ENCODE measurements at regions of chr2 and their contacts with region 1.

Region 1: DNA sequence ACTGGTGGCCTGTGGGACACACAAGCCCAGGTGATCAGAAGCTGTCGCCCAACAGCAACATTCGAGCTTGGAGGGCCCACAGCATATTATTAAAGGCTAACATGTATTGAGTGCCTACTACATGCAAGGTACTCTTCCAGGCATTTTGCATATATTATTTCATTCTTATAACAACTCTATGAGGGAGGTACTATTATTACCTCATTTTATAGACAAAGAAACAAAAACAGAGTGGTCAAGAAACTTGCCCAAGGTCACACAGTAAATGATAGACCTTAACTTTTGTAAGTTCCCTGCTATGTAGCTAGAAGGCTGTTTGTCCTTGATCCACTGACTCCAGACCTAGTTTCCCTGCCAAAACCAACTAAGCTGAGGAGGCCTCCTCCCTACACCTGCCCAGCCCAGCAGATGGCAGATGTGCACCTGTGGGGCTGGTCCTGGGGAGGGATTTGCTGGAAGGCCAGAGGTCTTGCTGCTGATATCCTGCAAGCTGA is 35.7 kb downstream of the KANSL3 start:
- DNase-seq: peak; percentile 5
- H3K4me3 ChIP-seq: no peak overlapping the region
- H3K27ac ChIP-seq: no peak overlapping the region
- H3K4me1 ChIP-seq: no peaks in the 10 kb centered on the region
- CTCF ChIP-seq: 0 out of 2 replicates have a peak, but pooled peaks have one; percentile 23

Region 2: DNA sequence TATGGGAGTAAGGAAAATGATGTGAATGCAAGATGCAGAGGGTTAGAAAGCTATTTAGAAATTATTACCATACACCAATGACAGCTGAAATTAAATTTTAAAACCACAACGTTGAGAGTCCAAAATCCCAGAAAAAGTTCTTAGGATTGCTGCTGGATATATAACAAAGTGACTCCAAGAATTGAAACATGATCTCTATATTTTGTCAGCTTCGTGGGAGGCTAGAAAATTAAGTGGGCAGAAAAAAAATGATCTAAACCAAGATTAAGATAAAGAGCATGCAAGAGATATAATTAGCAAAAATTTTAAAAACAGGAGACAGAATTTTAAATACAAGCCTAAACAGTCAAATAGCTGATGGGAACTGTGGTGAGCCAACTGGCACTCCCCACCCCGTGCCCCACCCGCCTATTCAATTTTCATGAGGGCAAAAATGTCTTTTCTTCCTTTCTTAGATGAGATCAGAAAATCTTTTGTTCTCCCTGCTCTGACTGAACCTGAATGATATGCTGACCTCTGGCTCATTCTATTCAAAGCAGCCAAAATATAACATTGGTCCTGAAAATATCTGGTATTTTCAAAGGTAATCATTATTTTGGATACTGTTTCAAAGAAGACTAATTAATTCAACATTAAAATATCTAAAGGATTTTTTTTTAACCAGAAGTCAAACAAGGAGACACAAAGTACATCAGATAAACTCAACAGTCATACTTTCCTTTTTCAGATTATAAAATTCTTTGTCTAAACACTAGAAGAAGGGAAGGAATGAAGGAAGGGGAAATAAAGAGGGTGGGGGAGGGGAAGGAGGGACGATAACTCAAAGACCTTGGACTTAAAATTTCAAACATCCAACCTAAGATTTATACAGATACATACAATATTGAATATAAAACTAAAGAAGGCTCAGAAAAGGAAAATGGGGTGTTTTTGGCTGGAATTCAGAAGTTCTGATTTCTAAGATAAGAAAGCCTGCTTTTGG is 23.5 kb after region 1 on chr2:
- CTCF ChIA-PET with region 1: no interaction called
- POLR2A ChIA-PET with region 1: no interaction called
- intact Hi-C with region 1: no loop called
- DNase-seq: no peak
- H3K4me3 ChIP-seq: no peak overlapping the region
- H3K27ac ChIP-seq: no peak overlapping the region
- H3K4me1 ChIP-seq: no peaks in the 10 kb centered on the region
- CTCF ChIP-seq: no peak

Region 3: GRCh38 chr2:96801005-96801785 is 198.8 kb after region 1 on chr2:
- CTCF ChIA-PET with region 1: no interaction called
- POLR2A ChIA-PET with region 1: no interaction called
- intact Hi-C with region 1: loop called (anchors 5 kb)
- DNase-seq: peak; percentile 80
- H3K4me3 ChIP-seq: no peak overlapping the region
- H3K27ac ChIP-seq: no peak overlapping the region
- H3K4me1 ChIP-seq: peaks cover 18% of the 10 kb centered on the region
- CTCF ChIP-seq: peak; percentile 89

Region 4: DNA sequence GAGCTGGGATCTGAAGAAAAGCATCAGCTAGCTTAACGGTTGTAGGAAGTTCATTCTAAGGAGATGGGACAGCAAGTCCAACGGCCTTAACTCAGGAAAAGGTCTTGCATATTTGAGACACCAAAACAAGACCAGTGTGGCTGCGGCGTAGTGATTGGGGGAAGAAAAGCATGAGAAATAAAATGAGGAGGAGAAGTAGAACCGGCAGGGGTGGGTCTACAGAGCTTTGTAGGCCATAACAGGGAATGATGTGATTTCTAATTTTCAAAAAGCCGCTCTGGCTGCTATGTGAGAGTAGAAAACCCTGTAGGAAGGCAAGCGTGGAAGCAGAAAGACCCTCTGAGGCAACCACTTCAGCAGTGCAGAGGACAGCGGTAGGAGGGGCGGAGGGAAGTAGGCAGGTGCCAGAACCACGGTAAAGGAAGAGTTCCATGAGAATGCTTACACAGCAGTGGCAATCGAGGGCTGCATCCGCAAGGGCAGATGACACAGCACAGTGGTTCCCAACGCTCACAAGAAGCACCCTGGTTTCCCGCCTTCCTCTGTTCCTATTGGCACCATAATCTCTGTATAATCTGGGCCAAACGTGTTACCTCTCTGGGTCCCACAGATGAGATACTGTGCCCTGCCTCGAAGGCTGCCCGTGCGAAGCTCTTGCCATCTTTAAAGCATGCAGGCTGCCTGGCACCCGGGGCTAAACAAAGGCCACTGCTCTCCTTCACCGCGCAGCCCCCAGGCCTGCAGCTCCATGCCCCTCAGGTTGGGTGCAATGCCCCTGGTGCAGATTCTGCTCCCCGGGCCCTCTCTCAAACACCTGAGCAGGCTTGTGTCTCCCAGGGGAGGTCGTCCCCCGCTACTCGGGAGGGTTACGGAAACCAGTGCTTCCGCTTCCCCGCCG is 254.6 kb after region 1 on chr2:
- CTCF ChIA-PET with region 1: no interaction called
- POLR2A ChIA-PET with region 1: no interaction called
- intact Hi-C with region 1: no loop called
- DNase-seq: peak; percentile 81
- H3K4me3 ChIP-seq: peak overlapping the region; percentile 77
- H3K27ac ChIP-seq: peak overlapping the region; percentile 62
- H3K4me1 ChIP-seq: peaks cover 14% of the 10 kb centered on the region
- CTCF ChIP-seq: no peak